ENCODE measurements at regions of chr12 and their contacts with region 1.

Region 1: DNA sequence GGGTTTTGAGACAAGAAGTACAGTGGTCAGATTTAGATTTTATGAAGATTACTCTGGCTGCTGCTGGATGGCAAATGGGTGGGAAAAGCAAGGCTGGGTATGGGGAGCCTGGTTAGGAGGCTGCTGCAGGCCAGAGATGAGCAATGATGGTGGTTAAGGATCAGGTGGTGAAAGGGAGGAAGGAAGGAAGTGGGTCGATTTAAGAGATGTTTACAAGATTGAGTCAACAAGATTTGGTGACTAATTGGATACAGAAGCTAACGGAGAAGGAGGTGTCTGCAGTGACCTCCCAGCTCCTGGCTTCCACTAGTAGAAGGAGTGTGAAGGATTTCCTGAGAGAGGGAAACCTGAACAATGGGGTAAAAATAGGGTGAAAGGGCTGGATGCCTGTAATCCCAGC is 18.7 kb downstream of the NOS1 start:
- DNase-seq: peak; percentile 96
- ATAC-seq: peak; percentile 94
- H3K4me3 ChIP-seq: no peak overlapping the region
- H3K27ac ChIP-seq: peak overlapping the region; percentile 77
- H3K4me1 ChIP-seq: peaks cover 32% of the 10 kb centered on the region
- H3K27me3 ChIP-seq: peaks cover 12% of the 10 kb centered on the region
- CTCF ChIP-seq: no peak

Region 2: DNA sequence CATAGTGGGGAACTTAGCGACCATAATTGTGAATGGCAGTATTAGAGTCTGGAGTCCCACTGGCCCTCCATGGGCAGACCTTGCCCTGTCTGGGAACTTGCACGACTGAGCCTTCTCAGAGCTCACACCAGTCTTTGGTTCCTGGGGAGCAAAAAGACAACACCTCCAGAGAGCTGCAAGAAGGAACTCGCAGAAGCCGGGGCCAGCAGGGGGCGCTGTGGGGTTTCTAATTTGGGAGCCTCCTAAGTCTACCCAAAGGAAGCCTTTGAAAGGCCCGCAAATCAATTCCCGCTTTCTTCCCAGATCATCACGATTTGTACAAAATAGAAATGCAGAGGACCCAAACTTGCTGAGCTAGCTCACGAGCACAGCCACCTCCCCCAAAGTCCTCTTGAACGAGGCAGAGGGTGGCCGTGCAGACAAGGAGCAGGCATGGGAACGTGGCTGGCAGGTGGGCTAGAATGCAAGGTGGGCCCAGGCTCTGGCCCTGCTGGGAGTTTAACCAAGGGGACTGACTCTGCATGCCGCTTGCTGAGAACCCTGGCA is 106.2 kb before region 1 on chr12:
- CTCF ChIA-PET with region 1: no interaction called
- POLR2A ChIA-PET with region 1: no interaction called
- intact Hi-C with region 1: loop called (anchors 5 kb)
- DNase-seq: peak; percentile 89
- ATAC-seq: peak; percentile 97
- H3K4me3 ChIP-seq: no peak overlapping the region
- H3K27ac ChIP-seq: no peak overlapping the region
- H3K4me1 ChIP-seq: no peaks in the 10 kb centered on the region
- H3K27me3 ChIP-seq: peaks cover 15% of the 10 kb centered on the region; the same call in 1 of the 2 replicates
- CTCF ChIP-seq: peak; percentile 97

Region 3: DNA sequence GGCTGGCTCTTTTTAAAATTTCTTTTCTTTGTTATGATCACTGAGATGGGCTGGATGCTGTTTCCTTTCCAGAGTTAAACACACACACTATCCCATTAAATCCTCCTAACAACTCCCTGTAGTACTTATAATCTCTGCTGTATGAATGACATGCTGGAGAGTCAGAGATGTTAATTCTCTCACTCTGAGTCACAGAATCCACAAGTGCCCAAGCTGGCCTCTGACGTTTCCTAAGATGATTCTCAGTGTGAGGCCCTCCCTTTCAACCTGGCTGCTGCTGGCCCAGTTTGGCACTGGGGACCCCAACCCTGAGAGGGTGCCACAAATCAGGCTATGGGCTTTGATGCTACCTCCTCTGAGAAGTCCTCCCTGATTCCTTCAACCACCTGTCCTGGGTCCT is 13.4 kb after region 1 on chr12:
- CTCF ChIA-PET with region 1: interaction called, 4 read pairs
- POLR2A ChIA-PET with region 1: no interaction called
- intact Hi-C with region 1: loop called (anchors 2 kb)
- DNase-seq: peak; percentile 89
- ATAC-seq: peak; percentile 98
- H3K4me3 ChIP-seq: no peak overlapping the region
- H3K27ac ChIP-seq: no peak overlapping the region
- H3K4me1 ChIP-seq: peaks cover 9% of the 10 kb centered on the region
- H3K27me3 ChIP-seq: peaks cover 19% of the 10 kb centered on the region
- CTCF ChIP-seq: no peak

Region 4: DNA sequence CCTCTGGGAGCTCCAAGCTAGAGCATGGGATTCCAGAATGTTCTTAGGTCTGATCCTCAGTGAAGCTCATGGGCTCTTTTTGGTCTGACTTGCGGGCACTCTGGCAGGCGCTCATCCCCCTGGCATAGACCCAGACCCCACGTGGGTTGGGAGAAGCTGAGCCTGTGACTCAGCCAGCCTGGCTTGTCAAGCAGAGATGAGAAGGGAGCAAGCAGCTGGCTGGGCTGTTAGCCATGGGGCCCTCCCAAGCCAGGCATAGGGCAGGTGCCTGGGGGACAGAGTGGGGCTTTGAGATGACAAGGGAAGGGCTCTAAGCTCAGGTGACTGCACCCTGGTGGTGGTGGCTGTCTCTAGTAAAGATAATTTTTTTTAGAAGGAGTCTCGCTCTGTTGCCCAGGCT is 99.1 kb after region 1 on chr12:
- CTCF ChIA-PET with region 1: no interaction called
- POLR2A ChIA-PET with region 1: no interaction called
- intact Hi-C with region 1: no loop called
- DNase-seq: peak; percentile 76
- ATAC-seq: peak; percentile 75
- H3K4me3 ChIP-seq: no peak overlapping the region
- H3K27ac ChIP-seq: no peak overlapping the region
- H3K4me1 ChIP-seq: 0 out of 2 replicates have a peak, but pooled peaks cover 4% of the 10 kb centered on the region
- H3K27me3 ChIP-seq: no peaks in the 10 kb centered on the region
- CTCF ChIP-seq: no peak

Region 5: GRCh38 chr12:117494833-117495655 is 152.4 kb after region 1 on chr12:
- CTCF ChIA-PET with region 1: no interaction called
- POLR2A ChIA-PET with region 1: no interaction called
- intact Hi-C with region 1: no loop called
- DNase-seq: peak; percentile 53
- ATAC-seq: peak; percentile 59
- H3K4me3 ChIP-seq: no peak overlapping the region
- H3K27ac ChIP-seq: no peak overlapping the region
- H3K4me1 ChIP-seq: peaks cover 7% of the 10 kb centered on the region; the same call in 1 of the 2 replicates
- H3K27me3 ChIP-seq: no peaks in the 10 kb centered on the region
- CTCF ChIP-seq: no peak

Region 6: DNA sequence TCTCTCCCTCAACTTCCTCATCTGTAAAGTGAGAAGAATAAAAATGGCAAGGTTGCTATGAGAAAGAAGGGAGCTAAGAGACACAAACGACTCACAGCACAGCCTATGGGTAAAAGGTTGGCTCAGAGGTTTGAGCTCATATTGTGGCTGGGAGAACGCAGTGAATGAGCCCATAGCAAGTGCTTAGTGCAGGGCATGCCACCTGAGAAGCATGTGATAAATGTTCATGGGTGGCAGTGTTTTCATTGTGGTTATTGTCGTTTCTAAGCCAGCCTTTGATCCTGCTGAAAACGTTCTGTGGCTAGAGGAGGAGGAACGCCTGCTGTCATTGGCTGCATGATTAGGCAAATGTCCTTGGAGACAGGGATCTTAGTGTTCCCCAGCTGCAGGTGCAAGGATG is 475.7 kb after region 1 on chr12:
- CTCF ChIA-PET with region 1: no interaction called
- POLR2A ChIA-PET with region 1: no interaction called
- intact Hi-C with region 1: no loop called
- DNase-seq: peak; percentile 10
- ATAC-seq: peak; percentile 41; the same call in 1 of the 2 replicates
- H3K4me3 ChIP-seq: no peak overlapping the region
- H3K27ac ChIP-seq: no peak overlapping the region
- H3K4me1 ChIP-seq: peaks cover 6% of the 10 kb centered on the region; the same call in 1 of the 2 replicates
- H3K27me3 ChIP-seq: no peaks in the 10 kb centered on the region
- CTCF ChIP-seq: no peak

Region 7: DNA sequence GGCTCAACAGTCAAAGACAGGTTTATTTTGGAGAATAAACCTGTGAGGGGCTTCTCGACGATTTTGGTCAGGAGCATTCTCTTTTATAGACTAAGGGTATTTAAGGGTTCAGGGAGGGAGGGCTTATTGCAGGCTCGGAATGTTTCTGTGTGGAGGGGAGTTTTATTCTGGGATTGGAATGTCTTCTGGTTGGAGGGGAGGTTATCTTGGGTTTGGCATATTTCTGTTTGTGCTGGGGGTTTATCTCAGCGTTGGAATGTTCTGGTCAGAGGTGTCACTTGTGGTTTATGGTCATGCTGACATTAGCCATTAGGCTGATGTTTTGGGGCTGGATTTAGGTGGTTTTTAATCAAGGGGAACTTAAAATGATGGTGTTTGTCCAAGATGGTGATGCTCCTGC is 1137.6 kb after region 1 on chr12:
- CTCF ChIA-PET with region 1: no interaction called
- POLR2A ChIA-PET with region 1: no interaction called
- intact Hi-C with region 1: no loop called
- DNase-seq: no peak
- ATAC-seq: no peak
- H3K4me3 ChIP-seq: no peak overlapping the region
- H3K27ac ChIP-seq: no peak overlapping the region
- H3K4me1 ChIP-seq: no peaks in the 10 kb centered on the region
- H3K27me3 ChIP-seq: peaks cover 89% of the 10 kb centered on the region
- CTCF ChIP-seq: no peak